ENCODE measurements at regions of chr4 and their contacts with region 1.

Region 1: DNA sequence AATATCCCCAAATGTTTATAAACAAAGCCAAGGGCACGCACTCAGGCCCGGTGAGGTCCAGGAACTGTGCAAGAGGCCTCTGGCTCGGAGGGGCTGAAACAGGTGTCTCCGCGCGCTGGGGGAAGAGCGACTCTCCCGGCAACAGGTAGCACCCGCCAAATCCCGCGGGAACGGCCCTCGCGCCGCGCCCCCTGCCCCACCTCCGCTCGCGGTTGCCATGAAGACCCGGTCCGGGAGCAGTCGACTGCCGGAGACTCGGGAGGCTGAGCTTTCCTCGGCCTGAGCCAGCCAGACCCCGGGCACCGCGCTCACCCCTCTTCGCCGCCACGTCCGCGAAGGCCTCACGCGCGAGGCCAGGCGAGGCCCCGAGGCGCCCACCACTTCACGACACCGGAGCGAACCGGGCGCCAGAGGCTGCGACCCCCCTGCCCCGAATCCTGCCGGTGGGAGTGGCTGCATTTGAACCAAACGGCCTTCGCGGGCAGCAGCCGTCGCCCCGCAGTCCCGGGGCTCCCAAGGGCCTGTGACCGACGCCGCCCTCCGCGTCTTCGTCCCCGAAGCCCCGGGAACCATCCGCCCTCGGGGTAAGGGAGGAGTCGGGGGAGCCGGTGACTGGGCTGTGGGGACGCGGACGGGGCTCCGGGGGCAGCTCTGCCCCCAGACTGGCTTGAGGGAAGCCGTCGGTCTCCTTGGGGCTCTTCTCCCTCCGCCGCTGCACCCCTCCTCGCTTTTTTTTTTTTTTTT is at the start of gene NSUN7:
- DNase-seq: peak; percentile 38
- H3K4me3 ChIP-seq: peak within 1 kb of the TSS; percentile 64
- H3K27ac ChIP-seq: no peak within 1 kb of the TSS
- H3K4me1 ChIP-seq: no peaks in the 10 kb centered on the region
- H3K27me3 ChIP-seq: peaks cover 31% of the 10 kb centered on the region
- total RNA-seq, gene NSUN7: not detected in 2 replicates

Region 2: DNA sequence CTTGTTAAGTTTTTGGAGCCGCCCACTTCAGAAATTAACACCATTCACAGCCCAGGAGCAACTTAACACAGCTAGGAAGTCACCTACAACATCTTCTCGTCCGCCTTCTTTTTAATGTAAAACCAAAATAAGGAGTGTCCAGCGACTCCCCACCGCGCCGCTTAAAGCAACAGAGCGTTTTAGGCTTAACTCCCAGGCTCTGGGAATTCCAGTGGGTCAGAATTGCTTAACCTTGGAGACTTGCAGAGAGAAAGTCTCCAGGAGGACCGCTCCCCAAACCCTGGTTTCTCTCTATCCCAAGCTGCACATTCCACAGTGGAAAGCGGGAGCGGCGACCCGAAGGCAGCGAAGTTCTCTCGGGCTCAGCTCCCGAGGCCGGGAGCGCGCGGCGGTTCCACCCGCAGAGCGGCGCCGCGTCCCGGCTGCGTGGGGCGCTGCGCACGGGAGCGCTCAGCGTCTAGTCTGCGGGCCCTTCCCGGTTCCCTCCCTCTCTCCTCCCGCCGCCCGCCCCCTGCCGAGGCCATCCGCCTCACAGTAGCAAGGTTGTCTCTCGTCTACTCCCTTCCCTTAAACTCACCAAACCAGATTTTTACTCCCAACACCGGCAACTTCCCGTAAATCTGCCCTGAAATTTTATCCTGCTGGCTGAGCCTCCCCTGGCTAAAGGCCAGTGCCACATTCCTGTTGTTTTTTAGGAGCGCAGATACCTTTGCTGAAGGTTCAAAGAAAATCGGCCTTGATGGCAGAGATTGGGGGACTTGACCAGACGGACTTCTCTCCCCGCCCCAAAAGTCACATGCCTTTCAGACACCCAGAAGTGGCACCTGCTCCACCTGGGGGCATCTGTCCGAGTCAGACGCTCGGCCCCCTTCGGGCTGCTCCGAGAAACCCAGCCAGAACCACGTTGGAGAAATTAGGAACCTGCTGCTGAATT is 120.2 kb before region 1 on chr4 and contains the start of gene RBM47:
- in situ Hi-C with region 1: loop called (anchors 25 kb)
- DNase-seq: peak; percentile 76
- H3K4me3 ChIP-seq: peak within 1 kb of the TSS; percentile 79
- H3K27ac ChIP-seq: no peak within 1 kb of the TSS
- H3K4me1 ChIP-seq: no peaks in the 10 kb centered on the region
- H3K27me3 ChIP-seq: no peaks in the 10 kb centered on the region
- total RNA-seq, gene RBM47: 1.3 and 2.0 TPM in 2 replicates